Activated CD8-positive, alpha-beta T cell treated with anti-CD3 and anti-CD28 coated beads for 36 hours (primary cell): ENCODE measurements at regions of chr6 and their contacts with region 1.

Region 1: DNA sequence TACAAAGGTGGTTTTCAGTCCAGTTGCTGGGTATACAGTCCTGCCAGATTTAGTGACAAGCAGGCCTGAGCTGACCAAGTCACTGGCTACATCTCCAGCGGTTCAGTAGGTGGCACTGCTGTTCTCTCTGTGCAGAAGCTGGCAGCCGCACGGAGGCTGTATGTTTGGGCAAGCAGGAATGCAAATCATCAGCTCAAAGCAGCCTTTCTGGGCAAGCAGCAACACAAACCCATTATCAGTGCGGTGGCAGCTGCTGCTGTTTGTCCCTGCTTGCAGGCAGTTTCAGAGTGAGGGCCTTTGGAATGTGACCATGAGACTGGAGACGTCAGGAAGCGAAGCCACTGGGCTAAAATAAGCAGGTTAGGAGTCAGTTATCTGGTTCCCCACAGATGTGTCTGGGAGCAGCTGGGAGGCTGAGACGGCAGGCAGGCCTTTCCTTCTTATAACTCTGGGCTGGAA is 72.5 kb downstream of the TXLNB start:
- DNase-seq: peak; percentile 85
- ATAC-seq: peak; percentile 100
- H3K4me3 Mint-ChIP-seq: peak overlapping the region; percentile 22
- H3K27ac Mint-ChIP-seq: peak overlapping the region; percentile 72
- H3K4me1 Mint-ChIP-seq: peaks cover 11% of the 10 kb centered on the region
- H3K27me3 Mint-ChIP-seq: no peaks in the 10 kb centered on the region
- CTCF ChIP-seq: peak; percentile 87

Region 2: GRCh38 chr6:139198529-139199288 is 20.6 kb before region 1 on chr6:
- CTCF ChIA-PET with region 1: interaction called, 12 read pairs
- POLR2A ChIA-PET with region 1: no interaction called
- intact Hi-C with region 1: no loop called
- DNase-seq: no peak
- ATAC-seq: no peak
- H3K4me3 Mint-ChIP-seq: no peak overlapping the region
- H3K27ac Mint-ChIP-seq: no peak overlapping the region
- H3K4me1 Mint-ChIP-seq: no peaks in the 10 kb centered on the region
- H3K27me3 Mint-ChIP-seq: no peaks in the 10 kb centered on the region
- CTCF ChIP-seq: no peak

Region 3: GRCh38 chr6:139250296-139251044 is 31.2 kb after region 1 on chr6:
- CTCF ChIA-PET with region 1: interaction called, 12 read pairs
- POLR2A ChIA-PET with region 1: no interaction called
- intact Hi-C with region 1: no loop called
- DNase-seq: peak; percentile 69
- ATAC-seq: peak; percentile 96
- H3K4me3 Mint-ChIP-seq: no peak overlapping the region
- H3K27ac Mint-ChIP-seq: peak overlapping the region; percentile 77
- H3K4me1 Mint-ChIP-seq: peaks cover 48% of the 10 kb centered on the region
- H3K27me3 Mint-ChIP-seq: no peaks in the 10 kb centered on the region
- CTCF ChIP-seq: peak; percentile 71

Region 4: DNA sequence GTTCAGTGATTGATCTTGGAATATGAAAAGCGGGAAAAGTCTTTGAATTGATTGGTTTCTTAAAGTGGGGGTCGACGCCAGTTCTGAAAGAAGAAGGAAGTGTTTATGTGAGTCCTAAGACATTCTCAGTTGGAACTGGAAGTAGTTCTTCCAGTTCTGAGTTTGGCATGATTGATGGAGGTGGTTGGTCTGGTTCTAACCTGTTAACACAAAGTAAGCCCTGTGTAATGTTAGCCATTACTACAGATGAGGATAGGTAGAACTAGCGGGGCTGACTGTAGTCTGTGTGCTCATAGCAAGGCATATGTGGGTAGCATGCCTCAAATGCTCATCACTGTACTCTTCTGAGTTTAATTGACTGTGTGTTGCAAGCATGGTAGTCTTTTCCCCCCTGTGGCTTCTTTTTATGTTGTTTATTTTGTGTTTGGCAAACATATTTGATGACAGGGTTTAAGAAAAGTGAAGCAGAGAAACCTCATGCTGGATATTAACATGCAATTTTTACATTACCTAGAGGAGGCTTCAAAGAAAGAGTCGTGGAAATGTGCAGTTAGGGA is 130.2 kb after region 1 on chr6:
- CTCF ChIA-PET with region 1: interaction called, 17 read pairs
- POLR2A ChIA-PET with region 1: interaction called, 4 read pairs
- intact Hi-C with region 1: no loop called
- DNase-seq: no peak
- ATAC-seq: no peak
- H3K4me3 Mint-ChIP-seq: no peak overlapping the region
- H3K27ac Mint-ChIP-seq: no peak overlapping the region
- H3K4me1 Mint-ChIP-seq: peaks cover 5% of the 10 kb centered on the region
- H3K27me3 Mint-ChIP-seq: no peaks in the 10 kb centered on the region
- CTCF ChIP-seq: no peak

Region 5: DNA sequence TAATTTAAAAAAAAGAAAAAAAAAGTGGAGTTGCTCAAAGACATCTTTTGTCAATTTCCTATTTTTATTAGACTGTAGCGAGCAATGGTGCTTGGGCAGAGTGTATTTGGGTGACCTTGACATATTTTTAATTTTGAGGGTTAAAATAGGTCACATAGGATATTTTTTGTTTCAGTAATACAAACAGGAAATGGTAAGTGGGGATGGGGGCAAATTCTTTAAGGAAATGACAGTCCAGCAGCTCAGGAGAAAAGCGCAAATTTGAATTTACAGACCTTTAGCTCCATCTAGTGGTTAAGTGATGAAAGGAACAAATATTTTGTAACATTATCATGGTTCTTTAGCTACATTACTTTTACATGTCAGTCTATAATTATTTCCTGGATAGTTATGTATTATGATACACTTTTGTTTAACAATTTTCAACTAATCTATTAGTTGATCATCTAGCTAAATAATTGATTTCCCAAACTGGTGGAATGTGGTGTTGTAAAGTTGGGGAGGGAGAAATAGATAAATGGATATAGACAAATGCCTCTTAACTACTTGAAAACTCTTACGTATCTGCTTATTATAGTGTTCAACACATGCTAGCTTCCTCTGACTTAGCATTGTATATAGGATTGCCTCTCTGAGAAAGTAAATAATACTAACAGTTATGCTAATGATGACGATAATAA is 145.1 kb after region 1 on chr6:
- CTCF ChIA-PET with region 1: interaction called, 169 read pairs
- POLR2A ChIA-PET with region 1: interaction called, 4 read pairs
- intact Hi-C with region 1: loop called (anchors 1 kb)
- DNase-seq: no peak
- ATAC-seq: peak; percentile 65
- H3K4me3 Mint-ChIP-seq: no peak overlapping the region
- H3K27ac Mint-ChIP-seq: peak overlapping the region; percentile 48
- H3K4me1 Mint-ChIP-seq: peaks cover 26% of the 10 kb centered on the region
- H3K27me3 Mint-ChIP-seq: no peaks in the 10 kb centered on the region
- CTCF ChIP-seq: peak; percentile 79

Region 6: DNA sequence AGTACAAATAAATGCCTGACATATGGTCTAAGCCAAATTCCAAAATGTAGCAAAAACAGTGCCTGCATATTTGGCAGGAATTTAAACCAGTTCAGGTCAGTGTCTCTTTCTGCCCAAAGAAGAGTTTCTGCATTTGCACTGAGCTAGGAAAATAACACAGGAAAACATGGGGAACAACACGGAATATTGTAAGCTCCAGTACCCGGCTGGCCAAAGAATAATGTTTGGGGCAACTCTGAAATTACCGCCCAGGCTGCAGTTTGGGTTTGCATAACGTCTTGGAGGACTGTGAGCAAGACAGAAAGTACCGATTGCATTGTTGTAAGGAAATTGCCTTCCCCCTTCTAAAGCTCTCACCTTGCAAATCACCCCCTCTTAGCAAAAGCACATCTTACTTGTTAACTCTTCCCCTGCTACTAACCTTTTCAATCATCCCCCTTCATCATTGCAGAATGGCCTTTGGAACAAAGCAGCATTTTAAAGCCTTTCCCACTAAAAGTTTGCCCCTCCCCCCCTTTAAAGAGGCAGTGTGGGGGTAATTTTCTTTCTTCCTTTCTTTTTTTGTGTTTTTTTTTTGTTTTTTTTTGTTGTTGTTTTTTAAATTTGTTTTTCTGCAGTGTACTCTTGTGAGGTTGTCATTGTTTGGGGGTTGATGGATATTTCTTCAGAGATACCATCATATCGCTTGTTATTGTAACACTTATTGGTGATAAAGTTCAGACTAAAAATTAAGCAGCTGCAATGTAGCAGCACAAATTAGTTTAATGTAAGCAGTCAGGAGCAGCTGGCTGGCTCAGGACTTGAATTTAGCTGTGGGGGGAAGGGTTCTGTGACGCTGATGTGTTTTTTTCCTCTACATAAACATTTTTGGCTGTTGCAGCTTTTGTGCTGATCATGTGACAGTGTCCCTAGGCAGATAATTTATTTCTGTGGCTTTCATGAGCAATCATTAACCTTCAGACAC is 255.1 kb after region 1 on chr6:
- CTCF ChIA-PET with region 1: no interaction called
- POLR2A ChIA-PET with region 1: no interaction called
- intact Hi-C with region 1: no loop called
- DNase-seq: no peak
- ATAC-seq: no peak
- H3K4me3 Mint-ChIP-seq: no peak overlapping the region
- H3K27ac Mint-ChIP-seq: no peak overlapping the region
- H3K4me1 Mint-ChIP-seq: no peaks in the 10 kb centered on the region
- H3K27me3 Mint-ChIP-seq: no peaks in the 10 kb centered on the region
- CTCF ChIP-seq: no peak

Region 7: DNA sequence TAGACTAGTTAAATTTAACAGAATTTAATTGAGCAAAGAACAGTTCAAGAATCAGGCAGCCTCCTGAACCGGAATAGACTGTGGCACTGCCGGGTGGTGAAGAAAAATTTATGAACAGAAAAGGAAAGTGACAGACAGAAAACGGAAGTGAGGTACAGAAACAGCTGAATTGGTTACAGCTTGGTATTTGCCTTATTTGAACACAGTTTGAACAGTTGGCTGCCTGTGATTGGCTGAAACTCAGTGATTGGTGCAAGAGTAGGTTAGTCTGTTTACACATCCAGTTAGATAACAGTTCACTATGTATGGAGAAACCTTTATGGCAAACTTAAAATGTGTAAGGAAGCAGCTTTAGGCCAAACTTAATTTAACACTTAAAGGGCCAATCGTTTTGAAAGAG is 271.2 kb after region 1 on chr6:
- CTCF ChIA-PET with region 1: no interaction called
- POLR2A ChIA-PET with region 1: no interaction called
- intact Hi-C with region 1: no loop called
- DNase-seq: peak; percentile 29
- ATAC-seq: peak; percentile 68
- H3K4me3 Mint-ChIP-seq: no peak overlapping the region
- H3K27ac Mint-ChIP-seq: peak overlapping the region; percentile 12
- H3K4me1 Mint-ChIP-seq: peaks cover 6% of the 10 kb centered on the region
- H3K27me3 Mint-ChIP-seq: no peaks in the 10 kb centered on the region
- CTCF ChIP-seq: no peak